ENCODE measurements at regions of chr20 and their contacts with region 1.

Region 1: GRCh38 chr20:44210422-44211176 is at the start of gene OSER1:
- DNase-seq: peak; percentile 98
- ATAC-seq: peak; percentile 82
- H3K4me3 Mint-ChIP-seq: peak within 1 kb of the TSS; percentile 94
- H3K27ac Mint-ChIP-seq: peak within 1 kb of the TSS; percentile 92
- H3K4me1 Mint-ChIP-seq: peaks cover 48% of the 10 kb centered on the region
- H3K27me3 Mint-ChIP-seq: no peaks in the 10 kb centered on the region
- total RNA-seq, gene OSER1: 19.9 to 22.5 TPM

Region 2: GRCh38 chr20:43456809-43457639 is 753.6 kb before region 1 on chr20:
- CTCF ChIA-PET with region 1: no interaction called
- POLR2A ChIA-PET with region 1: no interaction called
- intact Hi-C with region 1: loop called in 1 of 2 experiments (anchors 1 kb)
- DNase-seq: peak; percentile 92
- ATAC-seq: peak; percentile 86
- H3K4me3 Mint-ChIP-seq: peak overlapping the region; percentile 91
- H3K27ac Mint-ChIP-seq: peak overlapping the region; percentile 99
- H3K4me1 Mint-ChIP-seq: peaks cover 30% of the 10 kb centered on the region
- H3K27me3 Mint-ChIP-seq: peaks cover 2% of the 10 kb centered on the region

Region 3: GRCh38 chr20:43666376-43667328 is 543.9 kb before region 1 on chr20 and contains the start of gene MYBL2:
- CTCF ChIA-PET with region 1: no interaction called
- POLR2A ChIA-PET with region 1: interaction called, 3 read pairs
- intact Hi-C with region 1: loop called in 1 of 2 experiments (anchors 1 kb)
- DNase-seq: peak; percentile 86
- ATAC-seq: peak; percentile 95
- H3K4me3 Mint-ChIP-seq: peak within 1 kb of the TSS; percentile 83
- H3K27ac Mint-ChIP-seq: peak within 1 kb of the TSS; percentile 58
- H3K4me1 Mint-ChIP-seq: peaks cover 2% of the 10 kb centered on the region
- H3K27me3 Mint-ChIP-seq: peaks cover 11% of the 10 kb centered on the region
- total RNA-seq, gene MYBL2: 99.8 to 113 TPM

Region 4: GRCh38 chr20:44151621-44152416 is 58.8 kb before region 1 on chr20:
- CTCF ChIA-PET with region 1: no interaction called
- POLR2A ChIA-PET with region 1: no interaction called
- intact Hi-C with region 1: no loop called
- DNase-seq: no peak
- ATAC-seq: no peak
- H3K4me3 Mint-ChIP-seq: no peak overlapping the region
- H3K27ac Mint-ChIP-seq: no peak overlapping the region
- H3K4me1 Mint-ChIP-seq: peaks cover 14% of the 10 kb centered on the region
- H3K27me3 Mint-ChIP-seq: no peaks in the 10 kb centered on the region

Region 5: DNA sequence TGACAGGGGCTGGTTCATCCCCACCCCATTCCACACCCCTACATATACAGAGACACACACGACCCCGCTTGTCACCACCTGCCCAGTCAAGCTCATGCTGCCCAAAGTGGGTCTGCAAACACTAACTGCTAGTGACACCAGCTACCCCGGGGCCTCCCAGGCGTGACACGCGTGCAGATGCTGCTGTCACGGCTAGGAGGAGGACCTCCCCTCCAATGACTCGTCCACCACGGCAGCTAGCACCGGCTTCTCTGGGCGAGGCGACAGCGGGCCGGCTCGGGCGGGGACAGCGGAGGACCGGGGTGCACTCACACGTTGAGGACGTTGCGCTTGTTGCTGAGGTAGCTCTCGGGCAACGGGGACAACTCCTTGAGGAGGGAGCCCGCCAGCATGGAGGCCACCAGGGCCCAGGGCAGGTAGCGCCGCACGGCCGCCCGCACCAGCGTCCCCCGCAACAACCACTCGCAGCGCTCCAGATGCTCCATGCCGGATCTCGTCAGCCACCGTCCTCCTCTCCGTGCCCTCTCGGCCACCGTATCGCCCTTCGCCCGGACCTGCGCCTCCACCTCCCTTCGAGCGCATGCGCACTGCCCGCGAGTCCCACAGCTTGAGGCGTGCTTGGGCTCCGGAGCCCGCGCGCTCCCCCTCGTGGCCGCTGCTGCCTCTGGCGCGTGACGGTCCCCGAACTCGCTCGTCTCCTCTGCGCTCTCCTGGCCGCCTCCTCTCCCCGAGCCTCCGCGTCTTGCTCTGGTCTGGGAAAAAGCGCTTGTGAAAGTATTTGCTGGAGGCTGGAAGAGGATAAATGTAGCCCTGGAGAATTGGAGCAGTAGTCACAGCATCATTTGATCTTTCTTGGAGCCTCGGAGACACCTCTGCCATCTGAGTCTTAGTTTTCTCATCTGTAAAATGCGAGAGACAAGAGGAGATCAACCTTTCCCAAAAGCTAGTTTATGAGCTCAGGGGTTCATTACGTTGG is 100.4 kb after region 1 on chr20 and contains the start of gene FITM2:
- CTCF ChIA-PET with region 1: interaction called, 346 read pairs
- POLR2A ChIA-PET with region 1: interaction called, 3 read pairs
- intact Hi-C with region 1: loop called in 1 of 2 experiments (anchors 1 kb)
- DNase-seq: peak; percentile 99
- ATAC-seq: peak; percentile 96
- H3K4me3 Mint-ChIP-seq: peak within 1 kb of the TSS; percentile 86
- H3K27ac Mint-ChIP-seq: peak within 1 kb of the TSS; percentile 66
- H3K4me1 Mint-ChIP-seq: peaks cover 17% of the 10 kb centered on the region
- H3K27me3 Mint-ChIP-seq: no peaks in the 10 kb centered on the region
- total RNA-seq, gene FITM2: 2.1 to 2.2 TPM

Region 6: GRCh38 chr20:44521484-44522481 is 311.2 kb after region 1 on chr20 and contains the start of gene SERINC3:
- CTCF ChIA-PET with region 1: no interaction called
- POLR2A ChIA-PET with region 1: no interaction called
- intact Hi-C with region 1: loop called in 1 of 2 experiments (anchors 1 kb)
- DNase-seq: peak; percentile 98
- ATAC-seq: peak; percentile 99
- H3K4me3 Mint-ChIP-seq: peak within 1 kb of the TSS; percentile 81
- H3K27ac Mint-ChIP-seq: peak within 1 kb of the TSS; percentile 93
- H3K4me1 Mint-ChIP-seq: peaks cover 55% of the 10 kb centered on the region
- H3K27me3 Mint-ChIP-seq: no peaks in the 10 kb centered on the region
- total RNA-seq, gene SERINC3: 51.9 to 58.5 TPM

Region 7: GRCh38 chr20:44733341-44734069 is 522.9 kb after region 1 on chr20:
- CTCF ChIA-PET with region 1: no interaction called
- POLR2A ChIA-PET with region 1: no interaction called
- intact Hi-C with region 1: loop called (anchors 2 to 10 kb)
- DNase-seq: peak; percentile 82
- ATAC-seq: peak; percentile 64
- H3K4me3 Mint-ChIP-seq: no peak overlapping the region
- H3K27ac Mint-ChIP-seq: no peak overlapping the region
- H3K4me1 Mint-ChIP-seq: peaks cover 26% of the 10 kb centered on the region
- H3K27me3 Mint-ChIP-seq: no peaks in the 10 kb centered on the region

Region 8: GRCh38 chr20:44885392-44886265 is 675.0 kb after region 1 on chr20 and contains the start of gene YWHAB:
- CTCF ChIA-PET with region 1: no interaction called
- POLR2A ChIA-PET with region 1: no interaction called
- intact Hi-C with region 1: loop called (anchors 1 to 10 kb)
- DNase-seq: peak; percentile 99
- ATAC-seq: peak; percentile 96
- H3K4me3 Mint-ChIP-seq: peak within 1 kb of the TSS; percentile 94
- H3K27ac Mint-ChIP-seq: peak within 1 kb of the TSS; percentile 95
- H3K4me1 Mint-ChIP-seq: peaks cover 58% of the 10 kb centered on the region
- H3K27me3 Mint-ChIP-seq: no peaks in the 10 kb centered on the region
- total RNA-seq, gene YWHAB: 273 to 326 TPM